CD4-positive, alpha-beta T cell (primary cell): ENCODE measurements at regions of chr2 and their contacts with region 1.

Region 1: GRCh38 chr2:171086352-171087290 is 74.1 kb downstream of the TLK1 start:
- DNase-seq: peak; percentile 20 to 82 (median 56)
- ATAC-seq: peak; percentile 64
- H3K4me3 ChIP-seq: peak overlapping the region; percentile 44
- H3K4me3 Mint-ChIP-seq: peak overlapping the region; percentile 84
- H3K27ac ChIP-seq: peak overlapping the region; percentile 31 to 64
- H3K27ac Mint-ChIP-seq: peak overlapping the region; percentile 88
- H3K4me1 ChIP-seq: peaks cover 19% of the 10 kb centered on the region
- H3K4me1 Mint-ChIP-seq: peaks cover 81% of the 10 kb centered on the region
- H3K27me3 ChIP-seq: no peaks in the 10 kb centered on the region
- H3K27me3 Mint-ChIP-seq: no peaks in the 10 kb centered on the region
- CTCF ChIP-seq: peak; percentile 83

Region 2: DNA sequence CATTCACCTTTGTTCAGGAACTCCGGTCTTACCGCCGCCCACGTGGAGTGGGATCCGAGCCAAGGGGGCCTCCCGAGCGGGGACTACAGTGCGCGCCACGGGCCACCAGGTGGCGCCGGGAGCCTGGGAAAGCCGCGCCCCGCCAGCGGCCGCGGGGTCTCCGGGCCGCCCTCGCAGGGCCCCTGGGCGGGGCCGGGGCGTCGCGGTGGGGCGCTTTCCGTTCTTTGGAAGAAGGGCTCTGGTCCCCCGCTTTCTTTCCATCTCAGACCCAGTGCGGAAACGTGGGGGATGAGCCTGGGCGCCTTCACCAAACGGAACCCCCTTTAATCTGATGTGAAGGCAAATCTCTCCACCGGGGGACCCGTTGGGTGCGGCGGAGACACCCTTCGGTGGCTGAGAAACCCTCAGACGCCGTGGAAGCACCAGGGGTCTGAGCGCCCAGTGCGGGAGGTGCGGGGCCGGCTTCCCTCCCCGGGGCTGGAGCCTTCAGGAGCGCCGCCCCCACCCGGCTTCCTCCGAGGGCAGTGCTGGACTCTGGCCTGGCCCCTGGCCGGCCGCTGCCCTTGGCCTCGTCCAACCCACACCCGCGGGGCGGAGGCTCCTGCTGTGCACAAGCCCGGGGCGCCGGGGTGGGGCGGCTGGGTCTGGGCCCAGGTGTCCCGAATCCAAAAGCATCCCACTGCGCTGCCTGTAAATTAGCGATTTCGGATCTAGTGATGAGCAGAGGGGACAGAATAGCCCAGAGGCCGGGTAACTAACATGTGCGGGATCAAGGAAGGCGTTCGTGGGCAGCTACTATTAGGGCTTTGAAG is 112.9 kb before region 1 on chr2:
- CTCF ChIA-PET with region 1: interaction called, 4 read pairs
- POLR2A ChIA-PET with region 1: interaction called, 12 read pairs
- intact Hi-C with region 1: loop called (anchors 1 to 2 kb)
- DNase-seq: peak; percentile 81 to 96 (median 84)
- ATAC-seq: peak; percentile 93
- H3K4me3 ChIP-seq: peak overlapping the region; percentile 86
- H3K4me3 Mint-ChIP-seq: peak overlapping the region; percentile 86
- H3K27ac ChIP-seq: peak overlapping the region in 1 of 2 donors; percentile 41
- H3K27ac Mint-ChIP-seq: peak overlapping the region; percentile 54
- H3K4me1 ChIP-seq: peaks cover 16% of the 10 kb centered on the region
- H3K4me1 Mint-ChIP-seq: peaks cover 12% of the 10 kb centered on the region
- H3K27me3 ChIP-seq: no peaks in the 10 kb centered on the region
- H3K27me3 Mint-ChIP-seq: no peaks in the 10 kb centered on the region
- CTCF ChIP-seq: peak; percentile 72

Region 3: GRCh38 chr2:171042253-171042969 is 44.2 kb before region 1 on chr2:
- CTCF ChIA-PET with region 1: interaction called, 3 read pairs
- POLR2A ChIA-PET with region 1: interaction called, 3 read pairs
- intact Hi-C with region 1: loop called (anchors 2 to 5 kb)
- DNase-seq: peak in 2 of 14 experiments; percentile 23 to 54
- ATAC-seq: peak; percentile 57
- H3K4me3 ChIP-seq: no peak overlapping the region
- H3K4me3 Mint-ChIP-seq: peak overlapping the region; percentile 14
- H3K27ac ChIP-seq: peak overlapping the region in 1 of 2 donors; percentile 31
- H3K27ac Mint-ChIP-seq: peak overlapping the region; percentile 85
- H3K4me1 ChIP-seq: peaks cover 11% of the 10 kb centered on the region
- H3K4me1 Mint-ChIP-seq: peaks cover 32% of the 10 kb centered on the region
- H3K27me3 ChIP-seq: no peaks in the 10 kb centered on the region
- H3K27me3 Mint-ChIP-seq: no peaks in the 10 kb centered on the region
- CTCF ChIP-seq: no peak

Region 4: GRCh38 chr2:171098607-171099006 is 12.0 kb after region 1 on chr2:
- CTCF ChIA-PET with region 1: interaction called, 6 read pairs
- POLR2A ChIA-PET with region 1: interaction called, 16 read pairs
- intact Hi-C with region 1: no loop called
- DNase-seq: no peak
- ATAC-seq: no peak
- H3K4me3 ChIP-seq: no peak overlapping the region
- H3K4me3 Mint-ChIP-seq: no peak overlapping the region
- H3K27ac ChIP-seq: no peak overlapping the region
- H3K27ac Mint-ChIP-seq: no peak overlapping the region
- H3K4me1 ChIP-seq: peaks cover 9% of the 10 kb centered on the region
- H3K4me1 Mint-ChIP-seq: peaks cover 48% of the 10 kb centered on the region
- H3K27me3 ChIP-seq: no peaks in the 10 kb centered on the region
- H3K27me3 Mint-ChIP-seq: no peaks in the 10 kb centered on the region
- CTCF ChIP-seq: no peak

Region 5: DNA sequence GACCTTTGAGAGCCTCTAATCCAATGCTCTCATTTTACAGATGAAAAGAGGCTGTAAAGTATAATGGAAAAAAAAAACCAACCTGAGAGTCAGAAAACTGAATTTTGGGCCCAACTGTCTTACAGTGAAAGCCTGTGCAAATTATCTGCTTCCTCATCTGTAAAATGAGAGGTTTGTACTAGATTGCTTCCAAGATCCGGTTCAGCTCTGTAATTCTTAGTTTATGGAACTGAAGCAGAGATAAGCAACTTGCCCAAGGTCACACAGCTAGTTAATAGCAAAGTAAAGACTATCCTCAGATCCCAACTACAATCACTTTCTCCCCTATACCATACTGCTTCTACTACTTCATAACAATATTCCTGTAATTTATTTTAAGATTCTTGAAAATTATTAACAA is 67.7 kb after region 1 on chr2:
- CTCF ChIA-PET with region 1: interaction called, 18 read pairs
- POLR2A ChIA-PET with region 1: interaction called, 43 read pairs
- intact Hi-C with region 1: loop called (anchors 1 to 2 kb)
- DNase-seq: no peak
- ATAC-seq: no peak
- H3K4me3 ChIP-seq: no peak overlapping the region
- H3K4me3 Mint-ChIP-seq: peak overlapping the region; percentile 55
- H3K27ac ChIP-seq: no peak overlapping the region
- H3K27ac Mint-ChIP-seq: no peak overlapping the region
- H3K4me1 ChIP-seq: peaks cover 25% of the 10 kb centered on the region
- H3K4me1 Mint-ChIP-seq: peaks cover 95% of the 10 kb centered on the region
- H3K27me3 ChIP-seq: no peaks in the 10 kb centered on the region
- H3K27me3 Mint-ChIP-seq: no peaks in the 10 kb centered on the region
- CTCF ChIP-seq: no peak

Region 6: DNA sequence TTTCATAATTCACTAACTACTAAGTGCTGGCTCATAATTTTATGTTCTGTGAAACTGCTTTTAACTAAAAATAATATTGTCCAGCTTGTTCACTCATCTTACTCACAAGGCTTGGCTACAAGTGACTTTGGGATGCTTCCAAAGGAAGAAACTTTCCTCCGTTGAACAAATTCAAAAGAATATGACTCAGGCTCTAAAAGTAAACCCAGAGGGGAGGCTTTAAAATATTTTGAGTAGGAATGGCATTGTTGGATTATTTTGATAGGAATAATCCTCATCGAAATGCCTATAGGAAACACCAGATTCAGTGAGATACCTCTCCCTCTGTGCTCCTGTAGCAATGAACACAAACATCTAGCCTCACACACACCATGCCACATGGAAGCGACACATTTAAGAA is 99.3 kb after region 1 on chr2:
- CTCF ChIA-PET with region 1: no interaction called
- POLR2A ChIA-PET with region 1: no interaction called
- intact Hi-C with region 1: no loop called
- DNase-seq: no peak
- ATAC-seq: no peak
- H3K4me3 ChIP-seq: no peak overlapping the region
- H3K4me3 Mint-ChIP-seq: no peak overlapping the region
- H3K27ac ChIP-seq: no peak overlapping the region
- H3K27ac Mint-ChIP-seq: no peak overlapping the region
- H3K4me1 ChIP-seq: no peaks in the 10 kb centered on the region
- H3K4me1 Mint-ChIP-seq: no peaks in the 10 kb centered on the region
- H3K27me3 ChIP-seq: no peaks in the 10 kb centered on the region
- H3K27me3 Mint-ChIP-seq: no peaks in the 10 kb centered on the region
- CTCF ChIP-seq: no peak

Region 7: GRCh38 chr2:171416009-171416926 is 329.6 kb after region 1 on chr2:
- CTCF ChIA-PET with region 1: interaction called, 9 read pairs
- POLR2A ChIA-PET with region 1: interaction called, 10 read pairs
- intact Hi-C with region 1: no loop called
- DNase-seq: peak; percentile 62 to 90 (median 77)
- ATAC-seq: peak; percentile 99
- H3K4me3 ChIP-seq: no peak overlapping the region
- H3K4me3 Mint-ChIP-seq: no peak overlapping the region
- H3K27ac ChIP-seq: no peak overlapping the region
- H3K27ac Mint-ChIP-seq: peak overlapping the region; percentile 18
- H3K4me1 ChIP-seq: peaks cover 4% of the 10 kb centered on the region
- H3K4me1 Mint-ChIP-seq: peaks cover 6% of the 10 kb centered on the region
- H3K27me3 ChIP-seq: no peaks in the 10 kb centered on the region
- H3K27me3 Mint-ChIP-seq: no peaks in the 10 kb centered on the region
- CTCF ChIP-seq: peak; percentile 89

Region 8: DNA sequence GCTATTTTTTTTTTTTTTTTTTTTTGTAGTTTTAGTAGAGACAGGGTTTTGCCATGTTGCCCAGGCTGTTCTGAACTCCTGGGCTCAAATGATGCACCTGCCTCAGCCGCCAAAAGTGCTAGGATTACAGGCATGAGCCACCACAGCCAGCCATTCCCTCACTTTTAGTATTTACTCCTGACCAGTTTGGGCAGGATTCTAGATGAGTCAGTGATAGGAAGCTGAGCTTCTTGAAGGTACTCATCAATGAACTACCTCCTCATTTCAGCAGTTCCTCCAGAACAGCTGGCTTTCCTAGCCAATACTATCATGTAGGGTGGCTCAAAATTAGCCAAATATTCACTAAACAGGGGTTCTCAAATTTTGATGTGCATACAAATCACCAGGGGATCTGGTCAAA is 492.9 kb after region 1 on chr2:
- CTCF ChIA-PET with region 1: no interaction called
- POLR2A ChIA-PET with region 1: no interaction called
- intact Hi-C with region 1: no loop called
- DNase-seq: no peak
- ATAC-seq: no peak
- H3K4me3 ChIP-seq: no peak overlapping the region
- H3K4me3 Mint-ChIP-seq: no peak overlapping the region
- H3K27ac ChIP-seq: no peak overlapping the region
- H3K27ac Mint-ChIP-seq: no peak overlapping the region
- H3K4me1 ChIP-seq: no peaks in the 10 kb centered on the region
- H3K4me1 Mint-ChIP-seq: peaks cover under 1% of the 10 kb centered on the region
- H3K27me3 ChIP-seq: no peaks in the 10 kb centered on the region
- H3K27me3 Mint-ChIP-seq: peaks cover 7% of the 10 kb centered on the region
- CTCF ChIP-seq: no peak